Endothelial cell of umbilical vein (primary cell): ENCODE measurements at regions of chr11 and their contacts with region 1.

Region 1: DNA sequence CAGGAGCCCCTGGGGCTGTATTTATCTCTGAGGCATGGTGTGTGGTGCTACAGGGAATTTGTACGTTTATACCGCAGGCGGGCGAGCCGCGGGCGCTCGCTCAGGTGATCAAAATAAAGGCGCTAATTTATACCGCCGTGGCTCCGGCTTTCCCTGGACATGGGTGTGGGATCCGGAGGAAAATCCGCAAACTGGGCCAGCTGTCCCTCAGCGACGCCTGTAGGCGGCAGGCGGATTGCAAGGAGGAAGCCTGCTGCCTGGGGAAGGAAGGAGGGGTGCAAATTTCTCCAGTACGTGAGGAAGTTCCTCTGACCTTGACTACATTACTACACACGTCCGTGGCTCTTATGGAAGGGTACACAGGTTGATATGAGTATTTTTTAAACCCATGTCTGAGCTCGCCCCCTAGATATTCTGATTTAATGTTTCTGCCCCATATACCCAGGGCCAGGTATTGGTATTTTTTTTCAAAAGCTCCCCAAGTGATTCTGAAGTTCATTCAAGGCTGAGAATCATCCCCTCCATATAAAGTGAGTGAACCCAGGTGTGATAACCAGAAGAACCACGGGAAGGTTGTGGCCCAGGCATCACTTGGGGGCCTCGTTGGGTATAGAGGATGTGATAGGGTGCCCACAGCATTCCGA is 2.8 kb downstream of the MYOD1 start:
- DNase-seq: no peak
- H3K4me3 ChIP-seq: no peak overlapping the region
- H3K27ac ChIP-seq: no peak overlapping the region
- H3K4me1 ChIP-seq: no peaks in the 10 kb centered on the region
- H3K27me3 ChIP-seq: peaks cover 63 to 73% of the 10 kb centered on the region in 2 experiments
- CTCF ChIP-seq: peak; percentile 38 to 58
- POLR2A ChIP-seq: no peak

Region 2: DNA sequence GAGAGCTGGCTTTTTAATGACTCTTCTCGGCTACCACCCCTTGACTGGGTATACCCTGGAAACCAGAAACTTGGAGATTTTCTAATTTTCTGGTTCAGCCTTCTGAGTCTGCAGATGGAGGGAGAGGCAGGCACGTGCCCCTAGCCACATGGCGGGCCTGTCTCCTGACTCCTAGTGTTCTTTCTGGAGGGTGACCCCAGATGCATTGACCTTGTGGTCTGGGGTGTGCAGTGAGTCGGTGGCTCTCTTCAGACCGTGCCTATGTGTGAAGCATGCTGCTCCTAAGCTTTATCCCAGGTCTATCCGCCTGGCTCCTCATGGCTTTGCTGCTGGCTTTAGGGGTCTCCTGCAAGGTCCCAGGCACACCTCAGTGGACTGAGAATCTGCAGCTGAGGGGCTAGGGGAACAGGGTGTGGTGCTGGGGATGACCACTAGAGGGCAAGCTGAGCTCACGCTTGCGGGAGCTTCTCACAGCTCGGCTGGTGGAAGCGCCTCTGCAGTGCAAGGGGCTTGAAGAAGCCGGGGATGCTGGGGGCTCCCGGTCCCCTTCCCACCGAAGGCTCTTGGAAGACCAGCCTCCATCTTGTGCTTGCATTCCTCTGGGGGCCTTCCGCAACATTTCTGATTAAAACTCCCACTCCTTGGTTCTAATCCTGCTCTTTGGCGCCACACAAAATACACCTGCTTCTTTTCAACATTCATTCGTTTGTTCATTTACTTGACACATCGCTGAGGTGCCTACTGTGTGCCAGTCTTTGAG is 123.2 kb before region 1 on chr11:
- CTCF ChIA-PET with region 1: interaction called, 62 read pairs
- POLR2A ChIA-PET with region 1: no interaction called
- dilution Hi-C with region 1: no loop called
- intact Hi-C with region 1: loop called (anchors 1 kb)
- DNase-seq: peak; percentile 61
- H3K4me3 ChIP-seq: no peak overlapping the region
- H3K27ac ChIP-seq: no peak overlapping the region
- H3K4me1 ChIP-seq: no peaks in the 10 kb centered on the region
- H3K27me3 ChIP-seq: no peaks in the 10 kb centered on the region
- CTCF ChIP-seq: peak; percentile 86 to 98
- POLR2A ChIP-seq: no peak

Region 3: DNA sequence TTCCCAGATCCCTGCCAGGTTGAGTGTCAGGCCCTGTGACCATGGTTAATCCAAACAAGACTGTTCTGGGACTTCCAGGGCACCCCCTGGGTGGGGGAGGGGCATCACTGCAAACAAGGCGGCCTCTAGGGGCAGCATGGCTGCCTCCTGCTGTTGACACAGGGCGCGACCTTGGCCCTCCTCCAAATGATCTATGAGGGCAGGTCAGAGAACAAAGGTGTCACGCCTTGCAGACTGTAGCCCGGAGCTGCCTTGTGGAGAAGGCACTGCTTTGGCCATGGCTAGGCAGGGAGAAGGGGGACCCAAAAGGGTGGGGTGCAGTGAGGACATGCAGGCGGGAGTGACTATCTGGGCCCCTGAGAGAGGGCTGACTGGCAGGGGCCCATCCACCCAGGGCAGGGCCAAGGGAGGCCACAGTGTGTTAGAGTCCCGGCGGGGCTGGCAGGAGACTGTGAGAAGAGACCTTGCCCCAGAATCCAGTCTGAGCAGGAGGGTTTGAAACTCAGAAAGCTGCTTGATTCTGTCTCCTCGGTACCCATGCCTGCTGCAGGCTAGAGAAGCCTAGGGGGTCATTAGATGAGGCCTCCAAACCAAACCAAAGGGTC is 48.0 kb after region 1 on chr11:
- CTCF ChIA-PET with region 1: no interaction called
- POLR2A ChIA-PET with region 1: no interaction called
- dilution Hi-C with region 1: no loop called
- intact Hi-C with region 1: no loop called
- DNase-seq: no peak
- H3K4me3 ChIP-seq: no peak overlapping the region
- H3K27ac ChIP-seq: no peak overlapping the region
- H3K4me1 ChIP-seq: no peaks in the 10 kb centered on the region
- H3K27me3 ChIP-seq: no peaks in the 10 kb centered on the region
- CTCF ChIP-seq: no peak
- POLR2A ChIP-seq: no peak